Calu3 (cell line): ENCODE measurements at regions of chr7 and their contacts with region 1.

Region 1: DNA sequence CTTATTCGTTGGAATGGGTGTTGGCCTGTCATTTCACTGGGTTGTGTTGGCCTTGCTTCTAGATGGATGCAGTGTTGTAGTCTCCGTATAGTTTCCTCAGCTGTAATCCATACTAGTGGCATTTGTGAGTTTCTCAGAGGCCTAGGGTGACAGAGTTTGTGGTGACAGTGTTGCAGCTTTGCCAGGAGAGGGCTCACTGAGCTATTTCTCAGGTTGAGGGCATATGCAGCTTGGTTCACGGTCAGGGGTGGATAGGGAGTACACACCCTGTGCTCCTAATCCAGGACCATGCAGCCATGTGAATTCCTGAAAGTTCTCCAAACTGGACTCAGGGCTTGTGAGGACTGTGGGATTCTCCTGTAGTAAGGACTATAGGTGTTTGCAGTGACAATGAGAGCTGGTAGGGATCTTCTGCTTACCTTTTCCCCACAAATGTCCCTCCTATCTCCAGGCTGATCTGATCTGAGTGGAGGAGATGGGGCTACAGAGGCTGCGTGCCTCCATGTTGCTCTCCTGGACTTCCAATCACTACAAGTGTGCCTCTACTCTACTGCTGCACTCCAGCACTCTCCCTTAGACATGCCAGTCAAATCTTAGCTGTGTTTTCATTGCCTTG is 229.0 kb downstream of the STK31 start:
- DNase-seq: peak; percentile 74
- H3K4me3 Mint-ChIP-seq: no peak overlapping the region
- H3K27ac Mint-ChIP-seq: no peak overlapping the region
- H3K4me1 Mint-ChIP-seq: no peaks in the 10 kb centered on the region
- H3K27me3 Mint-ChIP-seq: peaks cover 64% of the 10 kb centered on the region
- CTCF ChIP-seq: peak; percentile 79

Region 2: DNA sequence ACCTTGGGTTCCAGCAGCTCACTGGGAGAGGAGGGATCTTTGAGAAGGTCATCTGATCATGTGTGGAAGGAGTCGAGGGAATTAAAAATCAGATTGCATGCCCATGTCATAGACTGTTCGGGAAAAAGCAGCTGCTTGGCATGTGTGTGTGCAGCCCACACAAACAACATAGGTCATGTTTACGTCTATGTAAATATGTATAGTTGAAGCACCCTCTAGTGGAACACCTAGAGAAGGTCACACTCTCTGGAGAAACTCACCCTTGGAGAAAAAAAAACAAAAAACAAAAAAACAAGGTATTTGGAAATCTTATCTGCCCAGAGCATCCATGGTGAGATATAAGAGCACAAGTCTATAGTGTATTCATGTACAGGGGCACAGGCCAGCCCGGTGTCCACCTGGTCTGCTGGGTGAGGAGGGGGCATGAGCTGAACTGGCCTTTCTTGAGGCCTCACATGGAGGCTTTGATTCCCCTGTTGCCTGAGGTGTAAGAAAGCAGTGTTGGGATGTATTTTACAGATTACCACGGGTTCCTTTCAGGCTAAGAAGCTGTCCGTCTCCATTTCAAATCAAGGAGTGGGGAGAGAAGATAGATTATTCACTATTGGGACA is 443.0 kb after region 1 on chr7:
- CTCF ChIA-PET with region 1: interaction called, 17 read pairs
- intact Hi-C with region 1: loop called (anchors 1 kb)
- DNase-seq: no peak
- H3K4me3 Mint-ChIP-seq: no peak overlapping the region
- H3K27ac Mint-ChIP-seq: no peak overlapping the region
- H3K4me1 Mint-ChIP-seq: peaks cover 13% of the 10 kb centered on the region
- H3K27me3 Mint-ChIP-seq: peaks cover 71% of the 10 kb centered on the region
- CTCF ChIP-seq: peak; percentile 78

Region 3: GRCh38 chr7:24587848-24588247 is 648.8 kb after region 1 on chr7:
- CTCF ChIA-PET with region 1: no interaction called
- intact Hi-C with region 1: loop called (anchors 2 kb)
- DNase-seq: peak; percentile 66
- H3K4me3 Mint-ChIP-seq: no peak overlapping the region
- H3K27ac Mint-ChIP-seq: no peak overlapping the region
- H3K4me1 Mint-ChIP-seq: peaks cover 28% of the 10 kb centered on the region
- H3K27me3 Mint-ChIP-seq: no peaks in the 10 kb centered on the region
- CTCF ChIP-seq: peak; percentile 77

Region 4: DNA sequence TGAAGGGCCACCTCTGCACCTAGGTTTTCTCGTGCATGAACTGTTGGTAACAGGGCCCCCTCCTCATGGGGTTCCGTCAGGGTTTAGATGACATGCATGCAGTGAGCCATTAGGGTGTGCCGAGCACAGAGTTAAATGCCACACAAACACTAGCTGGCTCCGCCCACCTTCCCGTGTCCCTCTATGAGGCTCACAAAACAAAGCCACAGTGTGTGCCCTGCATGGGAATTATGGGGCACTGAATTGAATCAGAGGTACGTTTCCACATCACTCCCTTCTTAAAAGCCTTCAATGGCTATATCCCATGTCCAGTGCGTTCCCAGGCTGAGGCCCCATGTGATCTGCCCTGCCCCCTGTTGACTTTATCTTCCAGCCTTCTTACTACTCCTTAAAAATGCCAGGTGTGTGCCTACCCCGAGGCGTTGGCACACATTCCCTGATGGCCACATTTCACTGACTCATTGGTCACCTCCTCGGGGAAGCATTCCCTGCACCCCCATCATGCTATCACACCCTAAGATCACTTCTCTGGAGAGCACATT is 782.5 kb after region 1 on chr7:
- CTCF ChIA-PET with region 1: no interaction called
- intact Hi-C with region 1: loop called (anchors 2 kb)
- DNase-seq: peak; percentile 43
- H3K4me3 Mint-ChIP-seq: peak overlapping the region; percentile 29
- H3K27ac Mint-ChIP-seq: peak overlapping the region; percentile 10
- H3K4me1 Mint-ChIP-seq: peaks cover 13% of the 10 kb centered on the region
- H3K27me3 Mint-ChIP-seq: no peaks in the 10 kb centered on the region
- CTCF ChIP-seq: no peak